Testis (tissue), 5 donors: ENCODE measurements at regions of chr20 and their contacts with region 1.

Region 1: GRCh38 chr20:58868795-58869194 is 16.3 kb downstream of the GNAS start:
- DNase-seq: peak; percentile 55
- H3K4me3 ChIP-seq: no peak overlapping the region
- H3K27ac ChIP-seq: no peak overlapping the region
- H3K4me1 ChIP-seq: no peaks in the 10 kb centered on the region
- H3K27me3 ChIP-seq: no peaks in the 10 kb centered on the region
- CTCF ChIP-seq: no peak
- POLR2A ChIP-seq: no peak

Region 2: DNA sequence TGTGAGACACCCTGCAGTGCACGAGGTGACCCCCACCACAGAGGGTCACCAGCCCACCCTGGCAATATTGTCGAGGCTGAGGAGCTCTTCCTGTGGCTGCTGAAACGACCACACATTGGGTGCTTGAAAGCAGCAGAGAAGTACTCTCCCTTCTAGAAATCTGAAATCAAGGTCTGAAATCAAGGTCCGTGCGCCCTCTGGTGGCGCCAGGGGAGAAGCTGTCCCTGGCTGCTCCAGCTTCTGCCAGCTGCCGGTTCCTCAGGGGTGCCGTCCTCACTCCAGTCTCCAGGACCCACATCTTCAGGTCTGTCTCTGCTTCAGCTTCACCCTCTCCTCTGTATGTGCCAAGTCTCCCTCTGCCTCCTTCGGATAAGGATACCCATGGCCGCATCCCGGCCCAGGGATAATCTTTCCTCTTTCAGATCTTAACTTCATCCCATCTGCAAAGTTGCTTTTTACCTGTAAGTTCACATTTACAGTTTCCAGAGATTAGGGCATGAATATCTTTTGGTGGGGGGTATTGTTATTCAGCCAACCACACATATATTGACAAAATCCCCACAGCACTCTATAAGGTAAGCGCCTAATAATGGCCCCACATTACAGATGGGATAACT is 627.2 kb after region 1 on chr20:
- intact Hi-C with region 1: loop called (anchors 10 kb)
- DNase-seq: peak; percentile 89
- H3K4me3 ChIP-seq: no peak overlapping the region
- H3K27ac ChIP-seq: peak overlapping the region in 1 of 2 donors; percentile 48
- H3K4me1 ChIP-seq: peaks cover 6% of the 10 kb centered on the region
- H3K27me3 ChIP-seq: no peaks in the 10 kb centered on the region
- CTCF ChIP-seq: peak; percentile 57 to 88 (median 77)
- POLR2A ChIP-seq: no peak